ENCODE measurements at regions of chr19 and their contacts with region 1.

Region 1: GRCh38 chr19:16262618-16263017 is 62.0 kb upstream of the KLF2 start:
- DNase-seq: no peak
- H3K4me3 Mint-ChIP-seq: peak overlapping the region; percentile 60
- H3K27ac Mint-ChIP-seq: peak overlapping the region; percentile 87
- H3K4me1 Mint-ChIP-seq: peaks cover 86% of the 10 kb centered on the region
- H3K27me3 Mint-ChIP-seq: peaks cover 13% of the 10 kb centered on the region

Region 2: DNA sequence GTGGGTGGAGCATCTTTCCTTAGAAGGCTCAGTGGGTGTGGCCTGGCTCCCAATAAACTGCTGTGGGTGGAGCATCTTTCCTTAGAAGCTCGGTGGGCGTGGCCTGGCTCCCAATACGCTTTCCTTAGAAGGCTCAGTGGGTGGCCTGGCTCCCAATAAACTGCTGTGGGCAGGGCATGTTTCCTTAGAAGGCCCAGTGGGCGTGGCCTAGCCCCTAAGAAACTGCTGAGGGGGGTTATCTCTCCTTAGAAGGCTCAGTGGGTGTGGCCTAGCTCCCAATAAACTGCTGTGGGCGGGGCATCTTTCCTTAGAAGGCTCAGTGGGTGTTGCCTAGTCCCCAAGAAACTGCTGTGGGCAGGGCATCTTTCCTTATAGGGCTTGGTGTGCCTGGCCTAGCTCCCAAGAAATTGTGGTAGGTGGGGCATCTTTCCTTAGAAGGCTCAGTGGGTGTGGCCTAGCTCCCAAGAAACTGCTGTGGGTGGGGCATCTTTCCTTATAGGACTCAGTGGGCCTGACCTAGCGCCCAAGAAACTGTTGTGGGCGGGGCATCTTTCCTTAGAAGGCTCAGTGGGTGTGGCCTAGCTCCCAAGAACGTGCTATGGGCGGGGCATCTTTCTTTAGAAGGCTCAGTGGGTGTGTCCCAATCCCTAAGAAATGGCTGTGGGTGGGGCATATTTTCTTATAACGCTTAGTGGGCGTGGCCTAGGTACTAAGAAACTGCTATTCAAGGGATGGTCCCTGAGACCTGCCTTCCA is 108.9 kb before region 1 on chr19:
- CTCF ChIA-PET with region 1: no interaction called
- POLR2A ChIA-PET with region 1: interaction called, 11 read pairs
- DNase-seq: peak; percentile 22
- H3K4me3 Mint-ChIP-seq: no peak overlapping the region
- H3K27ac Mint-ChIP-seq: no peak overlapping the region
- H3K4me1 Mint-ChIP-seq: peaks cover 27% of the 10 kb centered on the region
- H3K27me3 Mint-ChIP-seq: no peaks in the 10 kb centered on the region

Measured in activated CD4-positive, alpha-beta T cell treated with anti-CD3 and anti-CD28 coated beads, Interleukin-2, amount 10 ng/mL, durations not matched to agents 7 days and 5 days (primary cell).